Endothelial cell of umbilical vein (primary cell): ENCODE measurements at regions of chr2 and their contacts with region 1.

Region 1: GRCh38 chr2:173027181-173028128 is 48.2 kb upstream of the MAP3K20 start:
- DNase-seq: peak; percentile 87
- H3K4me3 ChIP-seq: no peak overlapping the region
- H3K27ac ChIP-seq: no peak overlapping the region
- H3K4me1 ChIP-seq: no peaks in the 10 kb centered on the region
- H3K27me3 ChIP-seq: peaks cover 0 to 2% of the 10 kb centered on the region in 2 experiments
- CTCF ChIP-seq: peak; percentile 73 to 85
- POLR2A ChIP-seq: no peak

Region 2: GRCh38 chr2:172813314-172813888 is 214.1 kb before region 1 on chr2:
- CTCF ChIA-PET with region 1: interaction called, 41 read pairs
- POLR2A ChIA-PET with region 1: no interaction called
- dilution Hi-C with region 1: no loop called
- intact Hi-C with region 1: no loop called
- DNase-seq: peak; percentile 68
- H3K4me3 ChIP-seq: no peak overlapping the region
- H3K27ac ChIP-seq: no peak overlapping the region
- H3K4me1 ChIP-seq: no peaks in the 10 kb centered on the region
- H3K27me3 ChIP-seq: peaks cover 0 to 2% of the 10 kb centered on the region in 2 experiments
- CTCF ChIP-seq: peak in 1 of 2 donors; percentile 37
- POLR2A ChIP-seq: no peak

Region 3: GRCh38 chr2:173048897-173049661 is 21.6 kb after region 1 on chr2:
- CTCF ChIA-PET with region 1: interaction called, 12 read pairs
- POLR2A ChIA-PET with region 1: no interaction called
- dilution Hi-C with region 1: no loop called
- intact Hi-C with region 1: loop called (anchors 1 kb)
- DNase-seq: peak; percentile 91
- H3K4me3 ChIP-seq: peak overlapping the region in 1 of 3 experiments; percentile 1
- H3K27ac ChIP-seq: peak overlapping the region; percentile 70
- H3K4me1 ChIP-seq: peaks cover 18% of the 10 kb centered on the region
- H3K27me3 ChIP-seq: no peaks in the 10 kb centered on the region
- CTCF ChIP-seq: no peak
- POLR2A ChIP-seq: no peak

Region 4: DNA sequence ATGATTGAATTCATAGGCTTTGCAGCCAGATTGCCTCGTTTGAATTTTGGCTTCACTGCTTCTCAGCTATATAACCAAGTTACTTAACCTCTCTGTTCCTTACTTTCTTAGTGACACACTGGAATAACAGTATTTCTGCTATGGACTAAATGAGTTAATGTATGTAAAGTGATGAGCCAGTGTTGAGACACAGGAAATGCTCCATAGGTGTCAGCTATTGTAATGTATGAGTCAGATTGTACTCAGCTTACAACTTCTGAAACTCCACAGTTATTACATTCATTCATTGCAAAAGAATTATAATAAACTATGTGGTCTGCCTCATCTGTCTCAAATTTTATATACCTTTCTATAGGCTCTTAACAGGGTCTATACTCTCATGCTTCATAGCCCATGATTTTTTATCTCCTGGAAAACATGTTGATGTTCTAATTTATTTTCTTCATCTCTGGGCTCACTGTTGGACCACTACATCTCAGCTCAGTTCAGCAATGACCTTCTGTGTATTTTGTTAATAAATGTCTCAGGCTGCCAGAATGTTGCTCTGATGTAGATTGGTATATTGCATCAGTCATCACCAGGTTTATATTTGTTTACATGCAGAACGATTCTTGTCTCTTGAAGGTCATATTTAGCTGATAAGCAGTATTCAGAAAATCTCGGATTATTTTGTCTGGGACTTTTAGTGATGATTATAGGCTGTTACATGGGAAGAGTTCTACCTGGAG is 124.4 kb after region 1 on chr2:
- CTCF ChIA-PET with region 1: interaction called, 20 read pairs
- POLR2A ChIA-PET with region 1: no interaction called
- dilution Hi-C with region 1: no loop called
- intact Hi-C with region 1: no loop called
- DNase-seq: peak; percentile 66
- H3K4me3 ChIP-seq: no peak overlapping the region
- H3K27ac ChIP-seq: peak overlapping the region; percentile 3
- H3K4me1 ChIP-seq: peaks cover 18% of the 10 kb centered on the region
- H3K27me3 ChIP-seq: no peaks in the 10 kb centered on the region
- CTCF ChIP-seq: no peak
- POLR2A ChIP-seq: no peak

Region 5: DNA sequence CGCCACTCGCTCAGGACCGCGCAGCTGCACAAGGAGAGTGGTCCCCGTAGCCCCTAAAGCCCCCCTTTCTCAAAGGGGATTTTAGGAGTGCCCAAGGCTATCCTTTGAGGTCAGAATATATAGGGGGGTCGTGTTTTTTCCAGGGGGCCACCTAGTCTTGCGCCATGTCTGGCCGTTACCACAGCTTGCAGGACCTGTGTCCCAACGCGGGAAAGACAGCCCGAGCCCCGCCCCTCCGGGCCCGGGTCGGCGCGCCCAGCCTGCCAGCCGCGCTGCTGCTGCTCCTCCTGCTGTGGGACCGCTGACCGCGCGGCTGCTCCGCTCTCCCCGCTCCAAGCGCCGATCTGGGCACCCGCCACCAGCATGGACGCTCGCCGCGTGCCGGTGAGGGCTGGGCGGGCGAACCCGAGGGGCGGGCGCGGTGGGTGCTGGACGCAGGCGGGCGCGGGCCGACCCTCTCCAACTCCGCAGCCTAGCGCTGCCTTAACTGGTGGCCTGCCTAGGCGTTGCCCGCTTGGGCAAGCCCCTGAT is 327.2 kb after region 1 on chr2 and contains the start of gene CDCA7:
- CTCF ChIA-PET with region 1: interaction called, 8 read pairs
- POLR2A ChIA-PET with region 1: no interaction called
- dilution Hi-C with region 1: no loop called
- intact Hi-C with region 1: loop called (anchors 1 kb)
- DNase-seq: peak; percentile 80
- H3K4me3 ChIP-seq: peak within 1 kb of the TSS; percentile 52 to 90 (median 80)
- H3K27ac ChIP-seq: peak within 1 kb of the TSS; percentile 92
- H3K4me1 ChIP-seq: peaks cover 8% of the 10 kb centered on the region
- H3K27me3 ChIP-seq: peaks cover 0 to 3% of the 10 kb centered on the region in 2 experiments
- CTCF ChIP-seq: peak in 1 of 2 donors; percentile 5
- POLR2A ChIP-seq: no peak
- total RNA-seq, gene CDCA7: 27.7 and 29.7 TPM in 2 replicates

Region 6: GRCh38 chr2:174341286-174341994 is 1314.0 kb after region 1 on chr2:
- CTCF ChIA-PET with region 1: interaction called, 13 read pairs
- POLR2A ChIA-PET with region 1: no interaction called
- dilution Hi-C with region 1: no loop called
- intact Hi-C with region 1: loop called (anchors 5 kb)
- DNase-seq: peak; percentile 90
- H3K4me3 ChIP-seq: no peak overlapping the region
- H3K27ac ChIP-seq: no peak overlapping the region
- H3K4me1 ChIP-seq: peaks cover 29% of the 10 kb centered on the region
- H3K27me3 ChIP-seq: peaks cover 70 to 84% of the 10 kb centered on the region in 2 experiments
- CTCF ChIP-seq: peak; percentile 98 to 99
- POLR2A ChIP-seq: no peak